Activated naive CD4-positive, alpha-beta T cell treated with anti-CD3 and anti-CD28 coated beads for 36 hours (primary cell): ENCODE measurements at regions of chr10 and their contacts with region 1.

Region 1: DNA sequence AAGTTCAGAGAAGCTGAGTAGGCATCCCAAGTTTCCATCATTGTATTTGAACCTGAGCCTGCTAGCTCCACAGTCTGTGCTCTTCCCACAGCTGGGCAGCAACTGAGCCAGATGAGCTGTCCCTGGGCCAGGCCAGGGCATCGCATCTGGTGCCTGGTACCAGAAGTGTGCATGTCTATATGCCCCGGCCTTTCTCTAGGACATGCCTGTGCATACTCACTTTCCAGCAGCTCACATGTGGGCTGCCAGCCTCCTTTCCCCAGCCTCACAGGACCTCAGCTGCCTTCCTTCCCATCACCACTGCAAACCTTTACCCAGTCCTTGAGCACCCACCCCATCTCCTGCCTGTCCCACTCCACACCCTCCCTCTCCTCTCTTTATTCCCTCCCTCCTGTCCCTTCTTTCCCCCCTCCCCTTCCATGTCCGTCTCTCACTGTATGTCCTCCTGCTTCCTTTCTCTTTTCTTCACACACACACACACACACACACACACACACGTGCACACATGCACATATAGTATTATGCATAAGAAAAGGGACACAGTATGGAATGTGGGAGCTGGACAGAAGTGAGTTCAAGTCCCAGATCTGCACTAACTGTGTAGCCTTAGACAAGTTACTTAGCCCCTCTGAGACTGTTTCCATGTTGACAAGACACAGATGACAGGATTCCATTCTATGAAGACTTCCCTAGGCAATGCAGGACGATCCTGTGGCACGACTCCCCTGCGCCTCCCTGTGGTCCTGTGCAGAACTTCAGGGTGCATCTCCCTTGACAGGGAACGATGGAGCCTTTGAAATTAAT is 10.9 kb downstream of the CDHR1 start:
- DNase-seq: peak; percentile 86
- H3K4me3 Mint-ChIP-seq: no peak overlapping the region
- H3K27ac Mint-ChIP-seq: no peak overlapping the region
- H3K4me1 Mint-ChIP-seq: no peaks in the 10 kb centered on the region
- H3K27me3 Mint-ChIP-seq: no peaks in the 10 kb centered on the region

Region 2: GRCh38 chr10:84026544-84027257 is 178.6 kb before region 1 on chr10:
- CTCF ChIA-PET with region 1: no interaction called
- intact Hi-C with region 1: no loop called
- DNase-seq: peak; percentile 41
- H3K4me3 Mint-ChIP-seq: no peak overlapping the region
- H3K27ac Mint-ChIP-seq: no peak overlapping the region
- H3K4me1 Mint-ChIP-seq: no peaks in the 10 kb centered on the region
- H3K27me3 Mint-ChIP-seq: no peaks in the 10 kb centered on the region

Region 3: DNA sequence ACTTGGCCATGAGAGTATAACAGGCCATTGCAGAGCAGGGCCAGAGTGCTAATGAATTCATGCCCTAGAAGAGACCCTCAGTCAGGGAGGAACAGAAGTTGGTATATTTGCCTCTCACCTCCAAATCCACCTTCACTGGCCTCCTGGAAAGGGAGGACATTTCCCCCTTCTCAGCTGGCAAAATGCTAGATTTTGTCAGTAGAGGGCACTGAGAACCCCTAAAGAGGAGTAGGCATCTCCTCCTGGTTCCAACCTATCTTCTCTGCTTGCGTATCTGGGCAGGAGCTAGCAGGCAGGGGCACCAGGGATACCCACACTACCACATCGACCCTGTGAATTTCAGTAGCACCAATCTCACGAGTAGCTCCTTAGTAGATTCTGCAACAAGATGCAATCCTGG is 145.7 kb before region 1 on chr10:
- CTCF ChIA-PET with region 1: interaction called, 6 read pairs
- intact Hi-C with region 1: loop called (anchors 1 kb)
- DNase-seq: no peak
- H3K4me3 Mint-ChIP-seq: no peak overlapping the region
- H3K27ac Mint-ChIP-seq: no peak overlapping the region
- H3K4me1 Mint-ChIP-seq: no peaks in the 10 kb centered on the region
- H3K27me3 Mint-ChIP-seq: peaks cover 16% of the 10 kb centered on the region

Region 4: DNA sequence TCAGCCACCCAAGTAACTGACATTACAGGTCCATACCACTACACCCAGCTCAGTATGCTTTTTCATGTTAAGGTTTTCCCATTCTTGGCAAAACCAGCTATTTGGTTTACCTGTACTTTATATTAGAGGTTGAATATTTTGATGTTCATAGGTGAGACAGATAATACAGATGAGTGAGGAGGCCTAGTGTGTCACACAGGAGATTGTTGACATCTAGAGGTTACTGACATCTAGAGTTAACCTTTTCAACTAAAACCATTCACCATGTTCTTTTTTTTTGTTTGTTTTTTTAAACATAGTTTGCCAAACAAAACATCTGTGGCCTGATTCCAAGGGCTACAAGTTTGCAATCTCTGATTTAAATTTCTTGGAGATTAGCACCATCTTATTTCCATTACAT is 57.9 kb before region 1 on chr10:
- CTCF ChIA-PET with region 1: interaction called, 48 read pairs
- intact Hi-C with region 1: loop called (anchors 1 kb)
- DNase-seq: no peak
- H3K4me3 Mint-ChIP-seq: no peak overlapping the region
- H3K27ac Mint-ChIP-seq: no peak overlapping the region
- H3K4me1 Mint-ChIP-seq: peaks cover 24% of the 10 kb centered on the region
- H3K27me3 Mint-ChIP-seq: no peaks in the 10 kb centered on the region

Region 5: GRCh38 chr10:84152769-84153168 is 52.5 kb before region 1 on chr10:
- CTCF ChIA-PET with region 1: interaction called, 48 read pairs
- intact Hi-C with region 1: loop called (anchors 1 kb)
- DNase-seq: no peak
- H3K4me3 Mint-ChIP-seq: no peak overlapping the region
- H3K27ac Mint-ChIP-seq: peak overlapping the region; percentile 79
- H3K4me1 Mint-ChIP-seq: peaks cover 32% of the 10 kb centered on the region
- H3K27me3 Mint-ChIP-seq: no peaks in the 10 kb centered on the region

Region 6: GRCh38 chr10:84160663-84161362 is 44.4 kb before region 1 on chr10:
- CTCF ChIA-PET with region 1: interaction called, 4 read pairs
- intact Hi-C with region 1: loop called (anchors 1 kb)
- DNase-seq: no peak
- H3K4me3 Mint-ChIP-seq: no peak overlapping the region
- H3K27ac Mint-ChIP-seq: no peak overlapping the region
- H3K4me1 Mint-ChIP-seq: peaks cover 17% of the 10 kb centered on the region
- H3K27me3 Mint-ChIP-seq: peaks cover 4% of the 10 kb centered on the region